ENCODE measurements at regions of chr1 and their contacts with region 1.

Region 1: DNA sequence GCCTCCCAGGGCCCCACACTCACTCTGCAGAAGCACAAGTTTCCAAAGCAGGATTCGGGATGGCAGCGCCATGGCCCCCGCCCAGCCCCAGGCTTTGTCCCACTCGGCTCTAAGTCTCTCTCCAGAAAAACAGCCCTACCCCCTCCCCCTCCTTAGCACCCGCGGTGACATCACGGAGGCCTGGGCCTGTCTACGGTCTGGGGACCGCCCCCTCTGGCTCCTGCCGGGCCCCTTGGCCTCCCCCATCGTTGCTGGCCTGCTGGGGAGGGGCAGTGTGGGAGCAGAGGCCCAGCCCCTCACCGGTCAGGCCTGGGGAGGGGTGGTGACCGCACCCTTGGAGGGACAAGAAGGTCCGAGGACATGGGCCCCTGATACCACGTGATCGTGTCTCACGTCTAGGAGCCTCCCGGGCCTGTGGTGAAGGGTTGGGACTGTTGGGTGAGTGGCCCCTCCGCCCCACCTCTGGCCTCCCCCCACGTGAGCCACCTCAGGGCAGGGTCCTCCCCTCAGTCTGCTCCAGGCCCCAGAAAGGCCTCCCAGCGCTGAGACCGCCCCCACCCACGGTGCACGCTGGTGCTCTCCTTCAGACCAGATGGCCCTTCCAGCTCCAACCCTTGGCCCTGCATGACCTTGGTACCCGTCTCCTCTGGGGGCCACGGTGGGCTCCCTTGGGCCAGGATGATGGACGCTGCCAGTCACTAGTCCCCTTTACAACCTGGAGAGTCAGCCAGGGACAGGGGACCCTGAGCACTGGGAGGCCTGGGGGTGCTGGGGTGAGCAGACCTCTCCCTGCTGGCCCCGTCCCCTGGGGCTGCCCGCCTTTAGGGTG is at the start of gene MXRA8:
- DNase-seq: peak; percentile 61 to 65
- H3K4me3 ChIP-seq: peak within 1 kb of the TSS in 1 of 3 donors; percentile 28
- H3K27ac ChIP-seq: peak within 1 kb of the TSS; percentile 49 to 87 (median 86)
- H3K4me1 ChIP-seq: peaks cover 43 to 78% of the 10 kb centered on the region in 2 donors
- H3K27me3 ChIP-seq: no peaks in the 10 kb centered on the region
- CTCF ChIP-seq: no peak
- POLR2A ChIP-seq: no peak
- total RNA-seq, gene MXRA8: 57.1 to 143 (median 106) TPM

Region 2: GRCh38 chr1:1318131-1318652 is 40.5 kb before region 1 on chr1:
- intact Hi-C with region 1: loop called (anchors 5 kb)
- DNase-seq: peak; percentile 94 to 95
- H3K4me3 ChIP-seq: no peak overlapping the region
- H3K27ac ChIP-seq: peak overlapping the region in 1 of 3 donors; percentile 29
- H3K4me1 ChIP-seq: peaks cover 6 to 26% of the 10 kb centered on the region in 2 donors
- H3K27me3 ChIP-seq: no peaks in the 10 kb centered on the region
- CTCF ChIP-seq: no peak
- POLR2A ChIP-seq: no peak

Region 3: DNA sequence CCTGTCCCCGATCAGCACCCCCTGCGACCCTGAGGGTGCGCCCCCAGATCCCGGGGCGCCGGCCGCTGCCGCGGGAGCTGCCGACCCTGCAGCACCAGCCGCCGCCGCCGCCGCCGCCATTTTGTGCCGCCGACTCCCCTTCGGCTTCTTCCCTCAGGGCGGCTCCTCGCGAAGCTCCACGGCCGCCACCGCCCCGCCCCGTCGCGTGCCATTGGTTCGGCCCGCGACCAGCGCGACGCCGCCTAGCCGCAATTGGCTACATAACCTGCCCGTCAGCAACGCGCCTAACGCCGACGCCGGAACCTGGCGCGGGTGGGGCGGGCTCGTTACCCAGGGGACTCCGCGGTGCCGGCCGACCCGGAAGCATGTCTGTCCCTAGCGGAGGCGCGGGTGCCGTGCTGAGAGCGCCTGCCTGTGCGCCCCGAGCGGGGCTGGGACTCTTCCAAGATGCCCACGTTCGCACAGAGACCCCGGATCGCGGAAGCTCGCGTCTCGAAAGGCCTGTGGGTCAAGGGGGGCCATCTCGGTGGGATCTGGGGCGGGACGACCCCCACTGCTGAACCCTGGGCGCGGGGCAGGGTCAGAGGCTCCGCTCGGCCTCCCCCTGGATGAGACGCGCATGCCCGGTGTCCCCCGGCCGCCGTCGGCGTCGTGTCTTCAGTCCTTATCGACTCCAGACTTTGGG is 40.7 kb after region 1 on chr1 and contains the start of gene CCNL2:
- intact Hi-C with region 1: no loop called
- DNase-seq: peak; percentile 99
- H3K4me3 ChIP-seq: peak within 1 kb of the TSS; percentile 84 to 99 (median 87)
- H3K27ac ChIP-seq: peak within 1 kb of the TSS; percentile 46 to 84 (median 48)
- H3K4me1 ChIP-seq: peaks cover 16 to 18% of the 10 kb centered on the region in 2 donors
- H3K27me3 ChIP-seq: no peaks in the 10 kb centered on the region
- CTCF ChIP-seq: peak in 5 of 6 experiments; percentile 44 to 79 (median 70)
- POLR2A ChIP-seq: peak in 1 of 2 donors; percentile 74
- total RNA-seq, gene CCNL2: 167 to 307 (median 215) TPM